ENCODE measurements at regions of chr22 and their contacts with region 1.

Region 1: DNA sequence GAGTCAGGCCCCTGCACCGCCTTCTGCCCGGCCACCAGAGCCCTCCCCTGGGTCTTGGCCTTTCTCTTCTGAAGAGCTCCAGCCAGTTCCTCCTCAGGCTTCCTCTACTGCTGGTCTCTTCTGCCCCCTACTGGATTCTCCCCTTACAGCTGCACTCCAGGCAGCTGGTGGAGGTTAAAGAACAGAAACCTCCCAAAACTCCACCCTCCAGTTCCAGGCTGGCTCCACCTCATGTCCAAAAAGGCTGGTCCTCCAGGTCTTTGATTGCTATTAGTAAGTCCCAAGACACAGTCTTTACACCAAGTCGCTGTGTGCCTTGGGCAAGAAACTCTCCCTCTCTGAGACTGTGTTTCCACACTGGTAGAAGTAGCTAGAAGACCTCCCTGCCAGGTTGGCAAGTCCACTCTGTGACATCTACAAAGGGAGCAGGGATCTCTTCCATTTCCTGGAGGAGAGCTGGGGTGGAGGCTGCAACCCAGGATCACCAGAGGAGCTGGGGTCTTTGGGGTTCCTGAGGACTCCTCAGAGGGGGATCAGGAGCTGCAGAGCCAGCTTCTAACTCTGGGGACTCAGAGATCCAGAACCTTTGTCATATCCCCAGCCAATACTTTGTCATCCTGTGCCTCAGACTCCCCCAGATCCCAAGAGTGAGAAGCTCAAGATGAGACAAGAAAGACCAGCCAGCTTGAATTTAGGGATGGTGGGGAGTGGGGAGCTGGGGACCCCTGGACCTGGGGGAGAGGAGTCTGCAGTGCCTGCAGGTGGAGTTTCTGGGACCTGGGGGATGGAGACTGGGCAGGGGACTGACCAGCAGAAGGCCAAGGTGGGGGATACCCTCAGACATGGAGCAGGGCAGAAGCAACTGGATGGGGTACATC is 3.4 kb upstream of the IGLL5 start:
- DNase-seq: peak; percentile 86
- ATAC-seq: peak; percentile 59
- H3K4me3 ChIP-seq: peak overlapping the region in 2 of 5 experiments; percentile 11 to 44
- H3K4me3 Mint-ChIP-seq: peak overlapping the region; percentile 74
- H3K27ac ChIP-seq: peak overlapping the region; percentile 38 to 56
- H3K27ac Mint-ChIP-seq: peak overlapping the region; percentile 81
- H3K4me1 ChIP-seq: peaks cover 83 to 95% of the 10 kb centered on the region in 2 donors
- H3K4me1 Mint-ChIP-seq: peaks cover 94% of the 10 kb centered on the region
- H3K27me3 ChIP-seq: peaks cover 0 to 10% (median 3%) of the 10 kb centered on the region in 4 experiments
- H3K27me3 Mint-ChIP-seq: peaks cover 10% of the 10 kb centered on the region
- CTCF ChIP-seq: peak; percentile 77

Region 2: GRCh38 chr22:22587577-22588188 is 296.6 kb before region 1 on chr22:
- CTCF ChIA-PET with region 1: interaction called, 28 read pairs
- POLR2A ChIA-PET with region 1: no interaction called
- intact Hi-C with region 1: no loop called
- DNase-seq: no peak
- ATAC-seq: no peak
- H3K4me3 ChIP-seq: no peak overlapping the region
- H3K4me3 Mint-ChIP-seq: no peak overlapping the region
- H3K27ac ChIP-seq: peak overlapping the region in 1 of 2 donors; percentile 23
- H3K27ac Mint-ChIP-seq: no peak overlapping the region
- H3K4me1 ChIP-seq: peaks cover 36 to 38% of the 10 kb centered on the region in 2 donors
- H3K4me1 Mint-ChIP-seq: peaks cover 33% of the 10 kb centered on the region
- H3K27me3 ChIP-seq: no peaks in the 10 kb centered on the region
- H3K27me3 Mint-ChIP-seq: no peaks in the 10 kb centered on the region
- CTCF ChIP-seq: no peak

Region 3: DNA sequence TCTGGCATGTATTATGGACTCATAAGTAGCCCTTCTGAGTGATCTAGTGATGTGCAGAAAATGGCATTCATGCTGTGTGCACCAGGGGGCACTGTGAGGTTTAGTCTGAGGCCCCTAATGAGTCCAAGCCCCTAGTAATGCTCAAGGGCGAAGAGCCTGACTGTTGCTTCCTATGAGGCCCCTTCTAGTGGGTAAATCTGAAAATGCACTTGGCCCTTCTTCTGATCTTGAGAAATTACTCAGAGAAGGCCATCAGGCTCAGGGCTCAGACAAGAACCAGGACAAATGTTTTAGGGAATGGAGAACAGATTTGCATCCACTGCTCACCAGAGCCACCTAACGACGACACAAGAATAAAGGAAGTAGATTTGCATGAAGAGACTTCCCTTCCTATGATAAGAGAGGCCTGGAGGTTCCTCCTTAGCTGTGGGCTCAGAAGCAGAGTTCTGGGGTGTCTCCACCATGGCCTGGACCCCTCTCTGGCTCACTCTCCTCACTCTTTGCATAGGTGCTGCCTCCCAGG is 164.0 kb before region 1 on chr22:
- CTCF ChIA-PET with region 1: interaction called, 16 read pairs
- POLR2A ChIA-PET with region 1: no interaction called
- intact Hi-C with region 1: no loop called
- DNase-seq: peak; percentile 86
- ATAC-seq: peak; percentile 79
- H3K4me3 ChIP-seq: peak overlapping the region in 4 of 5 experiments; percentile 32 to 47 (median 38)
- H3K4me3 Mint-ChIP-seq: peak overlapping the region; percentile 60
- H3K27ac ChIP-seq: peak overlapping the region; percentile 92 to 96
- H3K27ac Mint-ChIP-seq: peak overlapping the region; percentile 95
- H3K4me1 ChIP-seq: peaks cover 43% of the 10 kb centered on the region in 2 donors
- H3K4me1 Mint-ChIP-seq: peaks cover 52% of the 10 kb centered on the region
- H3K27me3 ChIP-seq: no peaks in the 10 kb centered on the region
- H3K27me3 Mint-ChIP-seq: no peaks in the 10 kb centered on the region
- CTCF ChIP-seq: peak; percentile 78

Region 4: DNA sequence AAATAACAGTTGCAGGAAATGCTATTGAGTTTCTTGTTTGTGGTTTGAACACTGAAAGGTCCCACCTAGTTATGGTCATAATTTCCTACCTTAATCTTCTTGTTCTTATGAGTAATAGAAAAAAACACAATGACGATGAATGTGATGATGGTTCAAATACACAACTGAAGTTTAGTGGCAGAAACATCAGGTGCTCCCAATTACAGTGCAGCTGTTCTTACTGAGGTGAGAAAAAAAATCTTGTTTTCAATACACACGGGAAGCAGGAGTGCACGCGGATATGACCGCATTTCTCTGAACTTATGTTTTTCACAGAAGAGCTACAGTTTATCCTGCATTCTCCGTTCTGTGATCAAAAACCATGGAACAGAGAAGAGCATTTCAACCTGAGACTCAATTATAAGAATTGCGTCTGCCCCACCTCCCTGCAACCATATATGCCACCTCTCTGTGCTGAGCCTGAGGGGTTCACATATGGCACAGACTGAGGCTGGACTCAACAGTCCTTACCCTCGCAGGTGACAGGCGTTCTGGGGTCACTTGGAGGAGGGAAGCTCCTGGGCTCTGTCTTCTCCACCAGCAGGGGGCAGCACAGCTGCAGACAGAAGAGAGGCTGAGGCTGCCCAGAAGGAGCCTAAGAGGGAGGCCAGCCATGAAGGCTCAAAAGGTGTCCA is 96.3 kb before region 1 on chr22:
- CTCF ChIA-PET with region 1: interaction called, 71 read pairs
- POLR2A ChIA-PET with region 1: no interaction called
- intact Hi-C with region 1: loop called (anchors 1 kb)
- DNase-seq: peak; percentile 76
- ATAC-seq: peak; percentile 84
- H3K4me3 ChIP-seq: no peak overlapping the region
- H3K4me3 Mint-ChIP-seq: no peak overlapping the region
- H3K27ac ChIP-seq: no peak overlapping the region
- H3K27ac Mint-ChIP-seq: no peak overlapping the region
- H3K4me1 ChIP-seq: peaks cover 0 to 3% of the 10 kb centered on the region in 2 donors
- H3K4me1 Mint-ChIP-seq: no peaks in the 10 kb centered on the region
- H3K27me3 ChIP-seq: peaks cover 0 to 3% (median 0%) of the 10 kb centered on the region in 4 experiments
- H3K27me3 Mint-ChIP-seq: peaks cover 12% of the 10 kb centered on the region
- CTCF ChIP-seq: peak; percentile 81

Region 5: GRCh38 chr22:22855617-22856308 is 28.5 kb before region 1 on chr22:
- CTCF ChIA-PET with region 1: interaction called, 364 read pairs
- POLR2A ChIA-PET with region 1: interaction called, 6 read pairs
- intact Hi-C with region 1: loop called (anchors 1 kb)
- DNase-seq: peak; percentile 72
- ATAC-seq: peak; percentile 74
- H3K4me3 ChIP-seq: no peak overlapping the region
- H3K4me3 Mint-ChIP-seq: peak overlapping the region; percentile 47
- H3K27ac ChIP-seq: no peak overlapping the region
- H3K27ac Mint-ChIP-seq: peak overlapping the region; percentile 71
- H3K4me1 ChIP-seq: peaks cover 35 to 39% of the 10 kb centered on the region in 2 donors
- H3K4me1 Mint-ChIP-seq: peaks cover 34% of the 10 kb centered on the region
- H3K27me3 ChIP-seq: peaks cover 0 to 1% (median 0%) of the 10 kb centered on the region in 4 experiments
- H3K27me3 Mint-ChIP-seq: peaks cover 16% of the 10 kb centered on the region
- CTCF ChIP-seq: peak; percentile 72

Region 6: DNA sequence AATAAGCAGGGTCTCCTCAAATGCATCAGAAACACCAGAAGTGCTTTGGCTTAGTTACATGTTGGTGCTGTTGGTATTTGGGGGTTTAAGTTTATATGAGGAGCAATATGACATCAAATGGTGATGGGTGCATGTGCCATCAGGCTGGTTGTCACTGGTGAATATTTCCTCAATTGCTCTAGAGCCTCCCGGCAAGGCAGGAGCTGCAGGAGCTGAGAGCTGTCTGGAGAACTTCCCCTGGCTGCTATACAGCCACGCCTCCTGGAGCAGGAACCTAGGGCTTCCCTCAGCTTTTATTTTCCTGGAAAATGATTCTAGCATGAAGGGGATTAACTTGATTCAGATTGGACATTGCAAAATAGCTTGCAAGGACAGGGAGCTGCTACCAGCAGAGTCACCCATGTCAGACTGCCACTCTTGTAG is 19.1 kb after region 1 on chr22:
- CTCF ChIA-PET with region 1: interaction called, 17 read pairs
- POLR2A ChIA-PET with region 1: interaction called, 3 read pairs
- intact Hi-C with region 1: no loop called
- DNase-seq: no peak
- ATAC-seq: no peak
- H3K4me3 ChIP-seq: peak overlapping the region in 1 of 5 experiments; percentile 18
- H3K4me3 Mint-ChIP-seq: peak overlapping the region; percentile 69
- H3K27ac ChIP-seq: peak overlapping the region; percentile 52 to 53
- H3K27ac Mint-ChIP-seq: peak overlapping the region; percentile 61
- H3K4me1 ChIP-seq: peaks cover 43 to 77% of the 10 kb centered on the region in 2 donors
- H3K4me1 Mint-ChIP-seq: peaks cover 69% of the 10 kb centered on the region
- H3K27me3 ChIP-seq: no peaks in the 10 kb centered on the region
- H3K27me3 Mint-ChIP-seq: no peaks in the 10 kb centered on the region
- CTCF ChIP-seq: no peak

Region 7: DNA sequence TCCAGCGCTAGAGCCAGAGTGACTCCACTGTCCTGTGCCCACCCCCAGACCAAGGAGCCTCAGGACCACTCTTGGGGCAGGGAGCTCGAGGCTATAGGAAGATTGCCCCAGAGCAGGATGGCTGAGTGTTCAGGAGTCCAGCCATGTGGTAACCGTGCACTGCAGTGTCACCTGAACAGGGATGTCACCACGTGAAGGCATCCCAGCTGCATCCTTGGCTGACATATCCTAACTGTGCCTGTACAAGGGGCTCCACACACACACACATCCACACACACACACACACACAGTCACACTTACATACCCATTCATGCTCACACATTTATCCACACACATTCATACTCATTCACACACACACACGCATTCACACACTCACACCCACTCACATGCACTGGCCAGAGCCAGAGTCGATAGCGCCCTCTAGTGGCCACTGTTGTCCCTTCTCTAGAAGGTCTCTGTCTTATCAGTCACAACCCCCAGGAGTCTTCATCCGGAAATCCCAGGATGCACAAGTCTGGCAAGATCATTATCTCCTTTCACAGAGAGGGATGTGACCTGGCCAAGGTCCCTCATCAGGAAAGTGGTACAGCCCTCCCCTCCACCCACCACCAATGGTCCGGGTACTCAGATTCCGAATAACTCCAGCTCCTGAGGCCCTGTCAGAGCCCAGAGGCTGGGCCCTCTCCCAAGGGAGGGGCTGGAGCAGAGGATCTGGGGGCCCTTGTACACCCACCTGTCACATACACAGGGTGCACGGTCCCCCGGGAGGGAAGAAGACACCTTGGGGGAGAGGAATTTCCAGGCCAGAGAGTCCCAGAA is 58.5 kb after region 1 on chr22:
- CTCF ChIA-PET with region 1: interaction called, 181 read pairs
- POLR2A ChIA-PET with region 1: interaction called, 4 read pairs
- intact Hi-C with region 1: no loop called
- DNase-seq: peak; percentile 89
- ATAC-seq: peak; percentile 66
- H3K4me3 ChIP-seq: peak overlapping the region in 1 of 5 experiments; percentile 5
- H3K4me3 Mint-ChIP-seq: peak overlapping the region; percentile 51
- H3K27ac ChIP-seq: peak overlapping the region; percentile 66 to 79
- H3K27ac Mint-ChIP-seq: peak overlapping the region; percentile 83
- H3K4me1 ChIP-seq: peaks cover 92 to 96% of the 10 kb centered on the region in 2 donors
- H3K4me1 Mint-ChIP-seq: peaks cover 86% of the 10 kb centered on the region
- H3K27me3 ChIP-seq: no peaks in the 10 kb centered on the region
- H3K27me3 Mint-ChIP-seq: no peaks in the 10 kb centered on the region
- CTCF ChIP-seq: peak; percentile 83

Region 8: GRCh38 chr22:23098718-23099530 is 214.7 kb after region 1 on chr22:
- CTCF ChIA-PET with region 1: no interaction called
- POLR2A ChIA-PET with region 1: no interaction called
- intact Hi-C with region 1: no loop called
- DNase-seq: no peak
- ATAC-seq: no peak
- H3K4me3 ChIP-seq: no peak overlapping the region
- H3K4me3 Mint-ChIP-seq: no peak overlapping the region
- H3K27ac ChIP-seq: no peak overlapping the region
- H3K27ac Mint-ChIP-seq: no peak overlapping the region
- H3K4me1 ChIP-seq: no peaks in the 10 kb centered on the region
- H3K4me1 Mint-ChIP-seq: no peaks in the 10 kb centered on the region
- H3K27me3 ChIP-seq: no peaks in the 10 kb centered on the region
- H3K27me3 Mint-ChIP-seq: no peaks in the 10 kb centered on the region
- CTCF ChIP-seq: no peak

Measured in B cell (primary cell).